ENCODE measurements at regions of chr1 and their contacts with region 1.

Region 1: DNA sequence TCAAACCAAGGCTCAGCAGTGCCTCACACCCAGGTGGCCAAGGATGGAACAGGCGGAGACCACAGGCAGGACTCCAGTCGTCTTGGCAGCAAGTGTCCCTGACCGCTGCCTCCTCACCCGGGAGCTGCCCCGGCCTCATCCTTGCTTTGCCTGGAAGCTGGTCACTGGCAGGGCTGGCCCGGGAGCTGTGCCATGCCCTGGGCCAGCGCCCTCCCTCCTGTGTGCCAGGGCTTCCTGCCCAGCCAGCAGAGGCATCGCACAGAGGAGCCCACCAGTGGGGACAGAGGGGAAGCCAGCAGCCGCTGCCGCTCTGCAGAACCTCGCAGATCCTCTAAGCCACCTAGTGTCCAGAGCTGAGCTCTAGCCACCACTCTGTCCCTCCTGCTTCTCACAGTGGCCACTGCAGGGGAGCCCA is 7.8 kb downstream of the CASZ1 start:
- DNase-seq: peak; percentile 70 to 93
- ATAC-seq: peak; percentile 71 to 73
- H3K4me3 ChIP-seq: peak overlapping the region in 2 of 4 donors; percentile 7 to 8
- H3K27ac ChIP-seq: peak overlapping the region; percentile 98 to 100 (median 99)
- H3K4me1 ChIP-seq: peaks cover 76 to 79% of the 10 kb centered on the region in 2 donors
- H3K27me3 ChIP-seq: no peaks in the 10 kb centered on the region
- CTCF ChIP-seq: peak; percentile 62 to 72 (median 70)
- POLR2A ChIP-seq: peak in 1 of 2 donors; percentile 21

Region 2: GRCh38 chr1:10694633-10695627 is 93.7 kb before region 1 on chr1:
- in situ Hi-C with region 1: loop called in 2 of 4 experiments (anchors 25 kb)
- intact Hi-C with region 1: loop called (anchors 2 kb)
- DNase-seq: peak; percentile 85 to 90
- ATAC-seq: peak; percentile 75 to 76
- H3K4me3 ChIP-seq: peak overlapping the region; percentile 43 to 72 (median 54)
- H3K27ac ChIP-seq: peak overlapping the region; percentile 82 to 90 (median 86)
- H3K4me1 ChIP-seq: peaks cover 45 to 62% of the 10 kb centered on the region in 2 donors
- H3K27me3 ChIP-seq: no peaks in the 10 kb centered on the region
- CTCF ChIP-seq: no peak
- POLR2A ChIP-seq: peak; percentile 11 to 36

Region 3: DNA sequence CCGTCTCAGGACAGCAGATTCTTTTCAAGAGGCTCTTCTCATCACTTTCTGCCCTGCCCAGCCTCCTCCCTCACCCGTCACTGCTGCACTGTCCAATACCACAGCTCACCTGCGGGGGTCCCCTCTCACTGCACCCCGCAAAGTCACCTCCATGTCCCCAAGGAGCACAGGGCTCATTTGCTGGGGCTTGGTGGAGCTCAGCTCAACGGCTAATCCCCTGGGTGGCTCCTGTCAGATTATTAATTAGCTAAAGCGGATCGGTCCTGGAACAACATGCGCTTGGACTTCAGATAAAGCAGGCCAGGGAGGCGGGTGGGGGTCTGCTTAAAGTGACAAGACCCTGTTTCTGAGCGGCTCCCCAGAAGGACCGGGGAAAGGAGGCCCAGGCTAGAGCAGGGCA is 35.3 kb before region 1 on chr1:
- in situ Hi-C with region 1: no loop called
- intact Hi-C with region 1: loop called (anchors 2 kb)
- DNase-seq: no peak
- ATAC-seq: no peak
- H3K4me3 ChIP-seq: no peak overlapping the region
- H3K27ac ChIP-seq: peak overlapping the region in 3 of 4 donors; percentile 64 to 97 (median 97)
- H3K4me1 ChIP-seq: peaks cover 41 to 76% of the 10 kb centered on the region in 2 donors
- H3K27me3 ChIP-seq: no peaks in the 10 kb centered on the region
- CTCF ChIP-seq: peak in 2 of 5 experiments; percentile 28 to 29
- POLR2A ChIP-seq: no peak

Region 4: GRCh38 chr1:10776190-10776855 is 12.3 kb before region 1 on chr1:
- in situ Hi-C with region 1: no loop called
- intact Hi-C with region 1: no loop called
- DNase-seq: no peak
- ATAC-seq: no peak
- H3K4me3 ChIP-seq: no peak overlapping the region
- H3K27ac ChIP-seq: peak overlapping the region in 1 of 4 donors; percentile 11
- H3K4me1 ChIP-seq: peaks cover 75 to 90% of the 10 kb centered on the region in 2 donors
- H3K27me3 ChIP-seq: no peaks in the 10 kb centered on the region
- CTCF ChIP-seq: no peak
- POLR2A ChIP-seq: no peak

Region 5: GRCh38 chr1:10888286-10888685 is 99.7 kb after region 1 on chr1:
- in situ Hi-C with region 1: no loop called
- intact Hi-C with region 1: no loop called
- DNase-seq: no peak
- ATAC-seq: no peak
- H3K4me3 ChIP-seq: no peak overlapping the region
- H3K27ac ChIP-seq: no peak overlapping the region
- H3K4me1 ChIP-seq: no peaks in the 10 kb centered on the region
- H3K27me3 ChIP-seq: peaks cover 34 to 46% (median 45%) of the 10 kb centered on the region in 3 donors
- CTCF ChIP-seq: no peak
- POLR2A ChIP-seq: no peak

Region 6: DNA sequence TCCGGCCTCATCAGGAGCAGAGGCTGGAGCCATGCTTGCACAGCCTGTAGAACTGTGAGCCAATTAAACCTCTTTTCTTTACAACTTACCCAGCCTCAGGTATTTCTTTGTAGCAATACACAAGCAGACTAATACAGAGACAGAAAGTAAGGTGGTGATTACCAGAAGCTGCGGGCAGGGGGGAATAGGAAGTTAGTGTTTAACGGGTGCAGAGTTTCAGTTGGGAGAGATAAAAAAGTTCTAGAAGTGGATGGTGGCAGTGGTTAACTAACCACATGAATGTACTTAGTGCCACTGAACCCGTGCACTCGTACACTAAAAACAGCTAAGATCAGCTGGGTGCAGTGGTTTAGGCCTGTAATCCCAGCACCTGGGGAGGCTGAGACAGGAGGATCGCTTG is 143.5 kb after region 1 on chr1:
- in situ Hi-C with region 1: no loop called
- intact Hi-C with region 1: no loop called
- DNase-seq: no peak
- ATAC-seq: no peak
- H3K4me3 ChIP-seq: no peak overlapping the region
- H3K27ac ChIP-seq: no peak overlapping the region
- H3K4me1 ChIP-seq: no peaks in the 10 kb centered on the region
- H3K27me3 ChIP-seq: no peaks in the 10 kb centered on the region
- CTCF ChIP-seq: no peak
- POLR2A ChIP-seq: no peak

Measured in gastrocnemius medialis (tissue), 4 donors.